PC-9 (cell line): ENCODE measurements at regions of chr17 and their contacts with region 1.

Region 1: GRCh38 chr17:45834471-45835396 is 9.9 kb upstream of the SPPL2C start:
- DNase-seq: peak; percentile 32 to 52
- H3K4me3 ChIP-seq: no peak overlapping the region
- H3K27ac ChIP-seq: no peak overlapping the region
- H3K4me1 ChIP-seq: no peaks in the 10 kb centered on the region
- H3K27me3 ChIP-seq: peaks cover 79% of the 10 kb centered on the region
- CTCF ChIP-seq: no peak

Region 2: DNA sequence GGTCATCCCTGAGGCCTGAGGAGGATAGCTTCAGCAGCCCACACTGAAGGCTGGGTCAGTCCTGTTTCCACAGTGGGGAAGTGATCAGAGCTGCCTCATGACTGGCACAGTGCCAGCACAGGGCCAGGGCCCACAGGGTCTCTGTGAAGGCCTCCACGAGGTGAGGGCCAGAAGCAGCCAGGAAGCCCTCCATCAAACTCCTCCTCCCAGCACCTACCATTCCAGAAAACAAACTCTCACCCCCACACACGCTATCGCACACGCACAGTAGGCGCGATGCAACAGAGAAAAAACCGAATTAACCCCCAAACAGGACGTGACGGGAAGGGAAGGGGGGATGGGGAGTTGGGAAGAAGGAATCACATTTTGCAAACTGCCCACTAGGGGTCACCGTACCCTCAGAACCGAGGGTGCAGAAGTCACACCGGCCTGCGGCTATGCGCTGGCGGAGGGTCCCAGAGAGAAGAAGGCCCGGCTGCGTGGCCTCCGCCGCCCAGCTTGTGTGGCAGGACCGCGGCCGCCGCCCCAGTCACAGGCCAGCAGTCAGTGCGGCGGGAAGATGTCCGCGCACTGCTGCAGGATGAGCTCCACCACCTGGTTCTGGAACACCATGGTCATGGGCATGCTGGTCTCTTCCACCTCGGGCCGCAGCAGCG is 439.7 kb before region 1 on chr17:
- CTCF ChIA-PET with region 1: no interaction called
- POLR2A ChIA-PET with region 1: no interaction called
- intact Hi-C with region 1: loop called (anchors 5 kb)
- DNase-seq: peak in 1 of 2 experiments; percentile 36
- H3K4me3 ChIP-seq: no peak overlapping the region
- H3K27ac ChIP-seq: no peak overlapping the region
- H3K4me1 ChIP-seq: no peaks in the 10 kb centered on the region
- H3K27me3 ChIP-seq: no peaks in the 10 kb centered on the region
- CTCF ChIP-seq: peak; percentile 88

Region 3: DNA sequence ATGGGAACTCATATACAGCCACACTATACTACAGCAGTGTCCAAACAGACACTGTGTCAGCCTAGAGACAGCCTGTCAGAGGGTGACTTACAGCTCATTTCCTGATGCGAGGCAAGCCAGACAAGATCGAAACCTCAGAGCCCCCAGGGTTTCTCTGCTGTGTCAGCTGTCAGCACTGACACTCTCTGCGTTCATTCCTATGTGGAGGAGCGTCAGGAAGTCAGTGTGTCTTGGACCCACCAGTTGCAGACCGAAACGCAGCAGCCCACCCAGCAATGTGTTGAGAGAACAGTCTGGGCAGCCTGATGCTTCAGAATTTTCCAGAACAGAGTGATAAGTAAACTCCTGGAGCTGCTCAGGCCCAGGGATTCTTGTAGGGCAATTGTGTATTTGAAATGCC is 39.0 kb after region 1 on chr17:
- CTCF ChIA-PET with region 1: no interaction called
- POLR2A ChIA-PET with region 1: no interaction called
- intact Hi-C with region 1: no loop called
- DNase-seq: no peak
- H3K4me3 ChIP-seq: no peak overlapping the region
- H3K27ac ChIP-seq: no peak overlapping the region
- H3K4me1 ChIP-seq: no peaks in the 10 kb centered on the region
- H3K27me3 ChIP-seq: peaks cover 92% of the 10 kb centered on the region
- CTCF ChIP-seq: no peak